Left lung (tissue), 14 donors: ENCODE measurements at regions of chr12 and their contacts with region 1.

Region 1: DNA sequence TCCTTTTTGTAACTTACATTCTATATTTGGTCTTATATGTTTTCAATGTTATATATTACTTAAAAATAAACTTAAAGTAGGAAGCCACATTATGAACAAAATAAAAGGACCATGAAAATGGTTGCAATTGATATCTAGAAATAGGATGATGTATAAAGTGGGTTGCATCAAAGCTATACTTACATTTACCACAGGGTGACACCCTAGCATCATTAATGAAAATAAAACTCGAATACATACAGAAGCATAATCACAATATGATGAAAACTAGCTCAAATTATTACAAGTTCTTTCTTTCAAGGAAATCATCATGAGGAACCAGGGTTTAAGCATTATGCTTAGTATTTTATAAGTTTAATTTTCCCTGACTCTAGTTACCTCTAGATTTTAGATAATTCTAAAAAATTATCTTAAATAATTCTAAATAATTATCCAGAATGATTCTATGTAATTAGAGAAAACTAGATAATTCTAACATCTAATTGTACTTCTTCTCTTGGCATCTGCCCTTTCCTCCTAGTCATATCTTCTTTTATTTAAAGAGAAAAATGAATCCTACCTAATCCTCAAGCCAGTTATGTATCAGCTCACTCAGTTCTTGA is 31.2 kb downstream of the TAS2R7 start:
- DNase-seq: peak in 2 of 4 donors; percentile 24 to 48
- ATAC-seq: peak; percentile 81
- H3K4me3 ChIP-seq: no peak overlapping the region
- H3K27ac ChIP-seq: no peak overlapping the region
- H3K4me1 ChIP-seq: no peaks in the 10 kb centered on the region
- H3K27me3 ChIP-seq: peaks cover 27 to 35% of the 10 kb centered on the region in 2 donors
- CTCF ChIP-seq: peak; percentile 44 to 73

Region 2: GRCh38 chr12:10613349-10614055 is 157.7 kb before region 1 on chr12 and contains the start of gene MAGOHB:
- intact Hi-C with region 1: no loop called
- DNase-seq: peak; percentile 95 to 98 (median 98)
- ATAC-seq: peak; percentile 98
- H3K4me3 ChIP-seq: peak within 1 kb of the TSS; percentile 57 to 91
- H3K27ac ChIP-seq: peak within 1 kb of the TSS; percentile 78 to 87
- H3K4me1 ChIP-seq: peaks cover 7 to 21% of the 10 kb centered on the region in 2 donors
- H3K27me3 ChIP-seq: no peaks in the 10 kb centered on the region
- CTCF ChIP-seq: no peak
- polyA plus RNA-seq, gene MAGOHB: 36.5 to 45.2 (median 40.4) TPM

Region 3: GRCh38 chr12:11130382-11130781 is 359.1 kb after region 1 on chr12:
- intact Hi-C with region 1: no loop called
- DNase-seq: no peak
- ATAC-seq: no peak
- H3K4me3 ChIP-seq: no peak overlapping the region
- H3K27ac ChIP-seq: no peak overlapping the region
- H3K4me1 ChIP-seq: no peaks in the 10 kb centered on the region
- H3K27me3 ChIP-seq: no peaks in the 10 kb centered on the region
- CTCF ChIP-seq: no peak

Region 4: DNA sequence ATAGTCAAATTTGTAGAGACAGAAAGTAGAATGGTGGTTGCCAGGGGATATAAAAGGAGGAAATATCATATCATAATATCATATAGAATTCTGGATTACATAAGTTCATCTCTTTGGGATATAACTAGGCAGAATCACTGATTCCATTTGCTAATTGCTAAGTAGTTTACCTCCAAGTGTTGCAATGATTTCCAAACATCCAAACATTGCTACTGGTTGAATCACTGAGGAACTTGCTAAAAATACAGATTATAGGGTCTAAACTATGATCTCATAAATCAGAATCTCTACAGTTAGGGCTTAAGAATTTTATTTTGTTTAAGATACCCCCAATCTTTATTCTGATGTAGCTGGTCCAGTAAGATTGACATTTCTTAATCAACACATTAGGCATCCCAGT is 431.6 kb after region 1 on chr12:
- intact Hi-C with region 1: loop called in 1 of 2 experiments (anchors 5 kb)
- DNase-seq: no peak
- ATAC-seq: no peak
- H3K4me3 ChIP-seq: no peak overlapping the region
- H3K27ac ChIP-seq: no peak overlapping the region
- H3K4me1 ChIP-seq: no peaks in the 10 kb centered on the region
- H3K27me3 ChIP-seq: no peaks in the 10 kb centered on the region
- CTCF ChIP-seq: no peak

Region 5: GRCh38 chr12:11486623-11487444 is 715.6 kb after region 1 on chr12:
- intact Hi-C with region 1: loop called in 1 of 2 experiments (anchors 10 kb)
- DNase-seq: peak; percentile 59 to 89 (median 77)
- ATAC-seq: peak; percentile 95
- H3K4me3 ChIP-seq: no peak overlapping the region
- H3K27ac ChIP-seq: no peak overlapping the region
- H3K4me1 ChIP-seq: no peaks in the 10 kb centered on the region
- H3K27me3 ChIP-seq: peaks cover 0 to 4% of the 10 kb centered on the region in 2 donors
- CTCF ChIP-seq: peak; percentile 84 to 97